Dorsolateral prefrontal cortex (tissue), 120 donors: ENCODE measurements at regions of chr5 and their contacts with region 1.

Region 1: DNA sequence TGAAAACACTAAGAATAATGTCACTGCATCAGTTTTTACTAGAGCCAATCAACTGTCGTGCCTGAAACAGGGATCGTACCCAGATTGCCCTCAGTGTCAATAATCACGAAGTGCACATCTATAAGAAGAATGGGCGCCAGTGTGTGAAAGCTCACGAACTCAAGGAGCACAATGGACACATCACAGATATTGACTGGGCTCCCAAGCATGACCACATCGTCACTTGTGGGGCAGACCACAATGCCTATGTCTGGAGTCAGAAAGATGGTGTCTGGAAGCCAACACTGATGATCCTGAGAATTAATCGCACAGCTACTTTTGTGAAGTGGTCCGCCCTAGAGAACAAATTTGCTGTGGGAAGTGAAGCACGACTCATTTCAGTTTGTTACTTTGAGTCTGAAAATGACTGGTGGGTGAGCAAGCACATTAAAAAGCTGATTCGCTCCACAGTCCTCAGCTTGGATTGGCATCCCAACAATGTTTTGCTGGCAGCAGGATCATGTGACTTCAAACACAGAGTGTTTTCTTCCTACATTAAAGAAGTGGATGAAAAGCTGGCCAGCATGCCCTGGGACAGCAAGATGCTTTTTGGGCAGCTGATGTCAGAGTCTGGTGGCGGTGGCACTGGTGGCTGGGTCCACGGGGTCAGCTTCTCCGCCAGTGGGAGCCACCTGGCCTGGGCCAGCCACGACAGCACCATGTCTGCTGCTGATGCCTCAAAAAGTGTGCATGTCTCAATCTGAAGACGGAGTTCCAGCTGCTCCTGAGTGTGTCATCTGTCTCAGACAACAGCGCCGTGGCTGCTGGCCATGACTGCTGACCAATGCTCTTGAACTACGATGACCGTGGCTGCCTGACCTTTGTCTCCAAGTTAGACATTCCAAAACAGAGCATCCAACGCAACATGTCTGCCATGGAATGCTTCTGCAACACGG is 32.2 kb downstream of the NSA2 start:
- DNase-seq: peak in 9 of 10 donors; percentile 32 to 72 (median 52)
- H3K4me3 ChIP-seq: peak overlapping the region in 48 of 59 donors; percentile 2 to 58 (median 32)
- H3K27ac ChIP-seq: peak overlapping the region; percentile 24 to 92 (median 83)
- H3K27me3 ChIP-seq: no peaks in the 10 kb centered on the region
- CTCF ChIP-seq: peak in 13 of 56 donors; percentile 3 to 47 (median 21)

Region 2: DNA sequence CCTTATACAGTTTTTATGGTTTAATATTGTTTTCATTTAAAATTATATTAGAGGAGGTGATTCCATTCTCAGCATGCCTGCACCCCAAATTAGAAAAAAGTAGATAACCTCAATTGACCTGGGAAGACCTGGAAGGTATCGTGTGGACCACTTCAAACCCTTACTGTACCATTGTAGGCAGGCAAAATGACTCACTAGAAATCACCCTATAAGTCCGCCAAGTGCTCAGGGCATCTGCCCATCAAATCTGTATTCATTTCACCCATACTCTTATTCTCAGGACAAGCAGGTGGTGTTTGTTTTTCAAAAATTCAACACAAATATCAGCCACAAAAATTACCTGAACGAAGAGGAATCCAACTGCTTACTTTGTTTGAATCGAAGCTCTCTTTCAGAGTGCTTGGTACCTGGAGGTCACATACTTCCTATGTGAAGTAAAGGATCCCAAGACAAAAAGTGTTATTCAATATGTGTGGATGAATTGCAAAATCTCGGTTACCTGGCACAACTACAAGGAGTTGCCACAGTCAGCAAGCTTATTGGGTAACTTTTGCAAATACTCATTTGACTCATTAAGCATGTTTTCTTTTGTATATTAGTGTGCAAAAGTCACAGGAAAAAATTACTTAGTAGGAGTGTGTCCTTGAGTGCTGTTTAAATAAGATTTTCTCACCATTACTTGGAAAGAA is 374.9 kb before region 1 on chr5:
- intact Hi-C with region 1: no loop called
- DNase-seq: no peak
- H3K4me3 ChIP-seq: no peak overlapping the region
- H3K27ac ChIP-seq: no peak overlapping the region
- H3K27me3 ChIP-seq: no peaks in the 10 kb centered on the region
- CTCF ChIP-seq: no peak

Region 3: GRCh38 chr5:74865804-74866595 is 66.8 kb after region 1 on chr5 and contains the start of gene FAM169A:
- intact Hi-C with region 1: loop called (anchors 5 to 10 kb)
- DNase-seq: peak in 5 of 10 donors; percentile 48 to 71 (median 57)
- H3K4me3 ChIP-seq: peak within 1 kb of the TSS; percentile 56 to 92 (median 80)
- H3K27ac ChIP-seq: peak within 1 kb of the TSS; percentile 43 to 96 (median 89)
- H3K27me3 ChIP-seq: no peaks in the 10 kb centered on the region
- CTCF ChIP-seq: peak in 15 of 56 donors; percentile 3 to 43 (median 12)
- total RNA-seq, gene FAM169A: 46.6 to 90.8 (median 70.1) TPM